Lower leg skin (tissue), 4 donors: ENCODE measurements at regions of chr4 and their contacts with region 1.

Region 1: GRCh38 chr4:134999169-134999568 is 797.6 kb upstream of the PABPC4L start:
- DNase-seq: no peak
- H3K4me3 ChIP-seq: no peak overlapping the region
- CTCF ChIP-seq: no peak
- POLR2A ChIP-seq: no peak

Region 2: DNA sequence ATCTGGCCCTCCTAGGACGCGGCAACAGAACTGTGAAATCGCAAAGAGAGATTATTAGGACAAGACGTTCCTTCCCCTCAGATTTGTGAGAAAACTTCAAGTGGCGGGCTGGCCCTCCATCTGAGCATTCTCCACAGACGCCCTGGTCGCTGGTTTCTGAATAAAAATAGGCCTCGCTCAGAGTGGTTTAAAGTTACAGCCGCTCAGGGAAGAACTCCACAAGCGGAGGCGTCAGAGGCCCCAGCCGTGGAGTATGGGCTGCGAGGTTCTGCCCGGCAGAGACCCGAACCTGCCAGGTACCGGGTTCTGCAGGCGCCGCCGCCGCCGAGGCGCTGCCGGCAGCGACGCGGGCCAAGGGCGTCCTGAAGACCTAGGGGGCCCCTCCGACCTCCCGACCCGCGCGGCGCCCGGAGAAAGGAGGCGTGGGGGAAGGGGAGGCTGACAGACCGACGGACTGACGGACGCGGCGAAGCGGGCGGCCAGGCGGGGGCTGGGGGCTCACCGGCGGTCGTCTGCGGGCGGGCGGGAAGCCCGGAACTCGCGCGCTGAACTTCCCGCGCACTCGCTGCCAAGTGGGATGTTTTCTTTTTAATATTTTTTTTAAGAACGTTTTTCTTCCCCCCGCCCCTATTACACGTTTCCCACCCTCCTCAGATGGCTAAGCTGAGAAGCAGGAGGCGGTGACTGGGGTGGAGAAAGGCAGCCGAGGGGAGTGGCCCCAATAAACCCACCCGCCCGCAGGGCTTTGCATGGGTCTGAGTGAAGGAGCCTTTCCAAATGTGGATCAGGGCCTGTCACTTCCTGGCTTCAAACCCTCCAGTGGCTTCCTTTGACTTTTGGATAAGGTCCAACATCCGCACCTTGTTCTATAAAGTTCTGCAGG is 797.7 kb before region 1 on chr4 and contains the start of gene PABPC4L:
- intact Hi-C with region 1: loop called (anchors 5 kb)
- DNase-seq: peak in 1 of 2 donors; percentile 83
- H3K4me3 ChIP-seq: peak within 1 kb of the TSS; percentile 27
- CTCF ChIP-seq: no peak
- POLR2A ChIP-seq: no peak
- total RNA-seq, gene PABPC4L: 0.29 to 0.54 (median 0.42) TPM in 3 of 4 donors, not detected in the other